ENCODE measurements at regions of chr15 and their contacts with region 1.

Region 1: GRCh38 chr15:57667171-57667849 is 39.2 kb upstream of the POLR2M start:
- DNase-seq: no peak
- H3K4me3 ChIP-seq: peak overlapping the region in 1 of 2 donors; percentile 16
- H3K27ac ChIP-seq: no peak overlapping the region
- H3K4me1 ChIP-seq: peaks cover 0 to 14% (median 6%) of the 10 kb centered on the region in 4 donors
- H3K27me3 ChIP-seq: no peaks in the 10 kb centered on the region
- CTCF ChIP-seq: peak; percentile 59 to 63

Region 2: GRCh38 chr15:57727031-57727430 is 59.7 kb after region 1 on chr15:
- intact Hi-C with region 1: loop called (anchors 5 kb)
- DNase-seq: no peak
- H3K4me3 ChIP-seq: no peak overlapping the region
- H3K27ac ChIP-seq: no peak overlapping the region
- H3K4me1 ChIP-seq: peaks cover 0 to 6% (median 2%) of the 10 kb centered on the region in 4 donors
- H3K27me3 ChIP-seq: no peaks in the 10 kb centered on the region
- CTCF ChIP-seq: no peak

Region 3: DNA sequence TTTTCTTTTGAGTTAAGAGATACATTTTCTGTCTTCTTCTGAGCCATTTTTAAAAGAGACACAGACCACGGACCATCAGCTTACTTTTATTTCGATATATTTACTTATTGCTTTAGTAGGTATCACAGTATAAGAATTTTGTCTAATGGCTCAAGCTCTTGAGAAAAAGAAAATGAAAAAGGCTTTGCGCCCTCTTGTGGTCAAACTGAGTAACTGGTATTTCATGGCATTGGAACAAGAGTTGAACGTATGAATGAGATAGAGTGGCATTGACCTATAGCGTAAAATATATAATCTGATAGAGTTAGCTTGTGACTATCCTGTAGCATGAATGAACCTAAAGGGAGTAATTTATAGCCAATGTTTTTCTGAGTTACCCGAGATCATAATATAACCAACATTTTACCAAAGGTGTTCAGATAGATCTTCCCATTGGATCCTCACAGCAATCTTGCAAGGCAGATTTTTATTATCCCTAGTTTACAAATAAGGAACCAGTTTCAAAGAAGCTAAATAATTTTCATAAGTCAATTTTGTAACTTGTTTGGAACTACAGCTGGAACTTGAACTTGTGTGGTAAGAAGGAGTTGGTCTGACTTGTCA is 193.8 kb after region 1 on chr15:
- intact Hi-C with region 1: loop called (anchors 5 kb)
- DNase-seq: no peak
- H3K4me3 ChIP-seq: no peak overlapping the region
- H3K27ac ChIP-seq: no peak overlapping the region
- H3K4me1 ChIP-seq: no peaks in the 10 kb centered on the region
- H3K27me3 ChIP-seq: no peaks in the 10 kb centered on the region
- CTCF ChIP-seq: peak; percentile 77 to 84

Region 4: DNA sequence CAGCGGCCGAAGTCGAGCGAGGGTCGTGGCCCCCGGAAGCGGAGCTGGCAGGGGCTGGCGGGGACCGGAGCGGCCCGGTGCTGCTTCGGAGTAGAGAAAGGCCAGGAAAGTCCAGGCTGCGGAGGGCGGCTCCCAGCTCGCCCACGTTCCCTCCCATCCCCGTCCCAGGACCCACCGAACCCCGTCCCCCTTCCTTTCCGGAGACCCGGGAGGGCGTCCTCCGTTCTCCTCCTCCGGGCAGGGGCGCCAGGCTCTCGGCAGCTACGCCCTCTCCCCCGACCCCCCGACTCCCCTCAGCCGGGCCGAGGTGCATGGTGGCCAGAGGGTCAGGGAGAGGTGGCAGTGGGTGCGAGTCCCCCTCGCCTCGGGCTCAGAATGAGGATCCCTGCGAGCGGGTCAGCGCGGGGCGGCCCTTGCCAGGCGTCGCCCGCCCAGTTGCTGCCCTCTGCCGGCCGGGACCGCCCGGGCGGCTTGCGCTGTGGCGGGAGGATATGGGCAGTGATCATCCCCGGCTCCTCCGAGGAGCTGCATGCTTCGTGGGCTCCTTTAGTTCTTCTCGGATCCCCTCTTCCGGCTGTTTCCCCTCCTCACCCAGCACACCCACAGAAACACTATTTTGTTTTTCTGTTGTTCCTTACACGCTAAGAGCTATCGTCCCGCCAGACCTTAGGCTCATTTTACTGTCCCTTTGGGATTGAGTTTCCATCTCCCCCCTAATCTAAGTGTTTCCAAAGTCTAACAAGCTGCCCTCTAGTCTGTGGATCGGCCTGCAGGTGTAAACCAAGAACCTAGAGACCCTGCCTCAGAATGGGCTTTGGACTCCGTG is 398.9 kb after region 1 on chr15:
- intact Hi-C with region 1: loop called (anchors 10 kb)
- DNase-seq: peak; percentile 30 to 69
- H3K4me3 ChIP-seq: peak overlapping the region; percentile 39 to 56
- H3K27ac ChIP-seq: no peak overlapping the region
- H3K4me1 ChIP-seq: peaks cover 0 to 18% (median 14%) of the 10 kb centered on the region in 4 donors
- H3K27me3 ChIP-seq: peaks cover 4 to 38% of the 10 kb centered on the region in 2 donors
- CTCF ChIP-seq: peak; percentile 70 to 82